ENCODE measurements at regions of chr3 and their contacts with region 1.

Region 1: DNA sequence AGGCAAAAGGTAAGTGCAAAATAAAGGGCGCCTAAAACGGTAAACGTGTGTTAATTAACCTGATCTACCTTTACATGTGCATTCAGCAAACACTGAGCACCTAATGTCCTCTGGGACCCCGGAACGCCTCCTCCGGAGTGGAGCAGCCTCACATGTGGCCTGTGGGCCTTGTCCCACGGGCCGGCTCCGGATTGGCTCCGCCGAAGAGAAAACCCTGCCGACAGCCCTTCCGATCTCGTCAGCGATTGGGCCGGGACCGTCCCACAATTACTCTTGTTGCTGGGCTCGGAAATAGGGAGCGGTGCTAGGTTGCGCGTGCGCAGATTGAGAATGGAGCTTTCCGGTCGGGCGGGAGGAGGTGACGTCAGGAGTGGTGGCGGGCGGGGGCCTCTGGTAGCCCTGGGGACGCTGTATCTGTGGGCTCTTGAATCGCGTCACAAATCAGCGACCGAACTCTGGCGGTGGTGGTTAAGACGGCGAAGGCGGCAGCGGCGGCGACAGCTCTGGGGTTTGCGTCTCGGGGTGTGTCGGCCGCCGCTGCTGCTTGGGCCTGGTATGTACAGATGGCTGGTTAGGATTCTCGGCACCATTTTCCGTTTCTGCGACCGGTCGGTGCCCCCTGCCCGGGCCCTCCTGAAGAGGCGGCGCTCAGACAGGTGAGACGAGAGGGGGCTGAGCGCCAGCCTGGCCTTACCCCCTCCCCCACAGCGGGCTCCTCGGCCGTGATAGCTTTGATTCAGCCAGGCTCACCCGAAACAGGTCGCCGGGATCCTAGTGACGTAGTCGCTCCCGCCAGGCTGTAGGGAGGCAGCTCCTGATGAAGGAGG is at the start of gene SENP2:
- DNase-seq: peak; percentile 99
- H3K4me3 ChIP-seq: peak within 1 kb of the TSS; percentile 78 to 96 (median 84)
- H3K27ac ChIP-seq: peak within 1 kb of the TSS; percentile 94 to 99 (median 98)
- H3K4me1 ChIP-seq: peaks cover 11 to 66% (median 46%) of the 10 kb centered on the region in 6 donors
- H3K27me3 ChIP-seq: no peaks in the 10 kb centered on the region
- CTCF ChIP-seq: peak in 1 of 11 experiments; percentile 15
- POLR2A ChIP-seq: peak in 1 of 3 donors; percentile 76
- total RNA-seq, gene SENP2: 19.2 to 40.0 (median 34.7) TPM

Region 2: GRCh38 chr3:185439745-185440466 is 146.2 kb before region 1 on chr3:
- intact Hi-C with region 1: no loop called
- DNase-seq: no peak
- H3K4me3 ChIP-seq: no peak overlapping the region
- H3K27ac ChIP-seq: no peak overlapping the region
- H3K4me1 ChIP-seq: no peaks in the 10 kb centered on the region
- H3K27me3 ChIP-seq: no peaks in the 10 kb centered on the region
- CTCF ChIP-seq: no peak
- POLR2A ChIP-seq: no peak

Region 3: DNA sequence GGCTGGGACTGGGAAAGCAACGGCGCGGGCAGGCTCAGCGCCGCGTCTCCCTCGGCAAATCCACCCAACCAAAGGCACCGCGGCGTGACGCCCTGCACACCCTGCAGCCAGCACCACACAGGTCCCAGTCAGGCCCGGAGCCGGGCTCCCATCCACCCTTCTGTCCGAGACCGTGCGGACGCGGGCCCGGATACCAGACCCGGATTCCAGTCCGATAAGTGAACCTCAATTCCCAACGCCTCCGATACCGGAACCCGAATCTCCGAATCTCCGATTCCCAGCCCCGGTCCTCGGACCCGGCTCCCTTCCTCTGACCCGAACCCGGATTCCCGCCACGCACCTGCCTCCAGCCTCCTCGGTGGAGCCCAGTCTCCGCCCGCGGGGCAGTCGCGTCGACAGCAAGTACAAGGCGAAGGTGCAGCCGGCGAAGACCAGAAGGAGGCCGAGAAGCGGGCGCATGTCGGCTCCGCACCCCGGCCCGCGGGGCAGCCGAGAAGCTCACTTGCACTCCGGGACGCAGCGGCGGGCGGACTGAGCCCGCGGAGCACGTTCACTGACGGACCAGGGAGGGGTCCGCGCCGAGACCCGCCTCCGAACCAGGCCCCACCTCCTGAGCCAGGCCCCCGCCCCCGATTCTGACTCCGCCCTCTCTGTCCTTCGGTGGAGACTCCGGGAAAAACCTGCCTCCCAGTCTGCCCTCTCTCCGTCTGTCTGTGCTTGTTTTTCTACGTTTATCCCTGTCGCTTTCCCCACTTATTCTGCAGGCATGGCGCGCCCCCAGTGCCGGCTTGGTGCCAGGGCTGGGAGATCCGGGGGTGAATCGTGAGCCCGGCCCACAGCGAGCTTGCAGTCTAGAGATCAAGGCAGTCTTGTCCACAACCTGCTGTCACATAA is 87.3 kb before region 1 on chr3 and contains the start of gene TMEM41A:
- intact Hi-C with region 1: loop called (anchors 10 kb)
- DNase-seq: peak; percentile 98
- H3K4me3 ChIP-seq: peak within 1 kb of the TSS; percentile 64 to 98 (median 90)
- H3K27ac ChIP-seq: peak within 1 kb of the TSS; percentile 65 to 92 (median 88)
- H3K4me1 ChIP-seq: peaks cover 0 to 39% (median 32%) of the 10 kb centered on the region in 6 donors
- H3K27me3 ChIP-seq: peaks cover 0 to 3% (median 0%) of the 10 kb centered on the region in 7 donors
- CTCF ChIP-seq: peak in 2 of 11 experiments; percentile 11 to 20
- POLR2A ChIP-seq: peak; percentile 22 to 83 (median 66)
- total RNA-seq, gene TMEM41A: 19.9 to 37.8 (median 26.8) TPM

Region 4: GRCh38 chr3:185824476-185825378 is 238.7 kb after region 1 on chr3 and contains the start of gene IGF2BP2:
- intact Hi-C with region 1: no loop called
- DNase-seq: peak; percentile 90
- H3K4me3 ChIP-seq: peak within 1 kb of the TSS; percentile 53 to 88 (median 72)
- H3K27ac ChIP-seq: peak within 1 kb of the TSS; percentile 62 to 88 (median 84)
- H3K4me1 ChIP-seq: peaks cover 3 to 63% (median 35%) of the 10 kb centered on the region in 6 donors
- H3K27me3 ChIP-seq: peaks cover 0 to 75% (median 32%) of the 10 kb centered on the region in 7 donors
- CTCF ChIP-seq: peak in 2 of 11 experiments; percentile 4 to 11
- POLR2A ChIP-seq: peak in 1 of 3 donors; percentile 15
- total RNA-seq, gene IGF2BP2: 10.0 to 21.1 (median 13.8) TPM